Sigmoid colon (tissue), 7 donors: ENCODE measurements at regions of chr22 and their contacts with region 1.

Region 1: DNA sequence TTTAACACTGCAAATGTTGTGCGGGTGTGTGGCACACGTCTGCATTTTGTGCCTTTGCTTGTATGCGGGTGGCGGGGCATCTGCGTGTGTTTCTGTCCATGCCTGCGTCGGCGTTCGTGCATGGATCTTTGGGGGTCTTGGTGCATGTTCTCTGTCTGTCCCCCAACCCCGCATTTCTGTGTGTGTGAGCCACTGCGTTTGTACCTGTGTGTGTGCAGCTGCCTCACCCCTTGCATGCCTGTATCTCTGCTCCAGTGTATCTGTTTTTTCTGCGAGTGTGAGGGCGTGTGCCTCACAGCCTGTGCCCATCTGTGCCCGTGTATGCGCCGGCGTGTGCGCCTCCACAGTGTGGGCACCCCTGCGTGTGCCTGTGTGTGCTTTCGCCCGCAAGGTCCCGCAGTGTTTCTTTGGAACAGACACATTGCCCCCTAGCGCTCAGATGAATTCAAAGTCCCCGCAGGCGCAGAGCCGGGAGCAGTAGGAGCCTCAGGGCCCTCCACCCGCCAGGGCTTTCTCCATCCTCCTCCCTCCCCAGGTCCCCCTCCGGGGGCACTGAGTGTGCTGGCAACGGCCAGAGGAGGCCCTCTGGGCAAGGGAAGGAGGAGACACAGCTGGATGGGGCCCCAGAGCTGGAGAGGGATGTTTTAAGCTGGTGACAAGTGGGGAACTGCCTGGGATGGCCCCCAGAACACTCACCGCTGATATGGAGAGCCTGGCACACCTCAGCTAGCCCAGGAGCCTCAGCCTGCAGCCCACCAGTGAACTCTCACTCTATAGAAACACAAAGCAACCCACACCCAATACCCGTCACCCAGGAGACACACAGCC is 3.1 kb upstream of the MN1 start:
- DNase-seq: peak; percentile 88
- H3K4me3 ChIP-seq: no peak overlapping the region
- H3K27ac ChIP-seq: no peak overlapping the region
- H3K4me1 ChIP-seq: peaks cover 0 to 40% (median 33%) of the 10 kb centered on the region in 4 donors
- H3K27me3 ChIP-seq: peaks cover 0 to 15% (median 12%) of the 10 kb centered on the region in 3 donors
- CTCF ChIP-seq: peak; percentile 45 to 81 (median 62)
- EP300 ChIP-seq: no peak
- POLR2A ChIP-seq: no peak

Region 2: DNA sequence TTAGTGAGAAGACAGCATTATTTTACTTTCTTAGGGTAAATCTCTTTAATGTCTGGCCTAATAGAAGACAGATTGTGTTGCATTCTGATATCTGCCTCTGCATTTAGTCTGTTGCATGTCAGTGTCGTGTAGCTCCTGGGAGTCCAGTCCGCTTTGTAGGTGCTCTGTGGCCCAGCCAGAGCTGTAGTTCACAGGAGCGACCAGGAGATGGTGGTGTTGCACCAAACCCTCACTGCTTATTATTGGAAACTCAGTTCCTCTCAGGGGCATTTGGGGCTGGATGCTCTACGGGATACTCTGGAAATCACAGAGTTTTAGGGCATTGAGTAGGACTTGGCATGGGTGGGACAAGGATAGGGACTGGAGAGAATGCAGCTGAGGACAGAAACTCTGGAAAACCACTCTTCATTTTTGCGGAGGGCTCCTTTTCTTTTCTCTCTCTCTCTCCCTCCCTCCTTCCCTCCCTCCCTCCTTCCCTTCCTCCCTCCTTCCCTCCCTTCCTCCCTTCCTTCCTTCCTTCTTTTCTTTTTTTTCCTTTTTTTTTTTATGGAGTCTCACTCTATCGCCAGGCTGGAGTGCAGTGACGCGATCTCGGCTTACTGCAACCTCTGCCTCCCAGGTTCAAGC is 1125.6 kb before region 1 on chr22:
- intact Hi-C with region 1: loop called (anchors 5 kb)
- DNase-seq: peak; percentile 81
- H3K4me3 ChIP-seq: no peak overlapping the region
- H3K27ac ChIP-seq: no peak overlapping the region
- H3K4me1 ChIP-seq: peaks cover 0 to 18% (median 12%) of the 10 kb centered on the region in 4 donors
- H3K27me3 ChIP-seq: no peaks in the 10 kb centered on the region
- CTCF ChIP-seq: peak; percentile 49 to 88 (median 87)
- EP300 ChIP-seq: no peak
- POLR2A ChIP-seq: no peak

Region 3: GRCh38 chr22:26756675-26757293 is 1047.9 kb before region 1 on chr22:
- intact Hi-C with region 1: loop called (anchors 2 kb)
- DNase-seq: peak; percentile 77
- H3K4me3 ChIP-seq: peak overlapping the region in 3 of 4 donors; percentile 18 to 34 (median 30)
- H3K27ac ChIP-seq: no peak overlapping the region
- H3K4me1 ChIP-seq: peaks cover 0 to 9% (median 0%) of the 10 kb centered on the region in 4 donors
- H3K27me3 ChIP-seq: no peaks in the 10 kb centered on the region
- CTCF ChIP-seq: peak; percentile 58 to 93 (median 70)
- EP300 ChIP-seq: no peak
- POLR2A ChIP-seq: no peak

Region 4: GRCh38 chr22:26995235-26995634 is 809.4 kb before region 1 on chr22:
- intact Hi-C with region 1: loop called (anchors 10 kb)
- DNase-seq: peak; percentile 84
- H3K4me3 ChIP-seq: no peak overlapping the region
- H3K27ac ChIP-seq: peak overlapping the region in 2 of 4 donors; percentile 8 to 26
- H3K4me1 ChIP-seq: peaks cover 0 to 31% (median 23%) of the 10 kb centered on the region in 4 donors
- H3K27me3 ChIP-seq: no peaks in the 10 kb centered on the region
- CTCF ChIP-seq: no peak
- EP300 ChIP-seq: no peak
- POLR2A ChIP-seq: no peak

Region 5: GRCh38 chr22:27107824-27108223 is 696.9 kb before region 1 on chr22:
- intact Hi-C with region 1: loop called (anchors 10 kb)
- DNase-seq: peak; percentile 88
- H3K4me3 ChIP-seq: no peak overlapping the region
- H3K27ac ChIP-seq: peak overlapping the region; percentile 74 to 84 (median 78)
- H3K4me1 ChIP-seq: peaks cover 0 to 67% (median 54%) of the 10 kb centered on the region in 4 donors
- H3K27me3 ChIP-seq: no peaks in the 10 kb centered on the region
- CTCF ChIP-seq: no peak
- EP300 ChIP-seq: no peak
- POLR2A ChIP-seq: no peak

Region 6: DNA sequence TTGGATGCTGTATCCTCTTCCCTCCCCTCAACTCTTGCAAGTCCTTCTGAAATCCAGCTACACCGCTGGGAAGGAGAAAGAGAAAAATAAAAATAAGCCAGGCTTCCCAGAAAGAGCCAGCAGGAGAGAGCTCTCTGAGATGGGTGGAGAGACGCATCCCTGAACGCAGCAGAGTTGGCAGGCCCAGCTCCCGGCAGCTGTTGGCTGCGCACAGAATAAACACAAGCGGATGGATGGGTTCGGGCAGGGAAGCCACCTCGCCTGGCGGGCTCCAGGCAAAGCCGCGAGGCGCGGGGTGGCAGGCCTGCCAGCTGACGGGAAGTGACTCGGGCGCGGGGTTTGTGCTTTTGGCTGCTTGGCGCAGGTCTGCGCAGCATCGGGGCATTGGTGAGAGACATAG is 609.6 kb before region 1 on chr22:
- intact Hi-C with region 1: loop called (anchors 10 kb)
- DNase-seq: peak; percentile 88
- H3K4me3 ChIP-seq: no peak overlapping the region
- H3K27ac ChIP-seq: peak overlapping the region; percentile 40 to 67 (median 64)
- H3K4me1 ChIP-seq: peaks cover 0 to 12% (median 9%) of the 10 kb centered on the region in 4 donors
- H3K27me3 ChIP-seq: no peaks in the 10 kb centered on the region
- CTCF ChIP-seq: no peak
- EP300 ChIP-seq: no peak
- POLR2A ChIP-seq: no peak

Region 7: GRCh38 chr22:27405672-27406388 is 398.9 kb before region 1 on chr22:
- intact Hi-C with region 1: loop called (anchors 10 kb)
- DNase-seq: no peak
- H3K4me3 ChIP-seq: no peak overlapping the region
- H3K27ac ChIP-seq: no peak overlapping the region
- H3K4me1 ChIP-seq: no peaks in the 10 kb centered on the region
- H3K27me3 ChIP-seq: peaks cover 0 to 7% (median 0%) of the 10 kb centered on the region in 3 donors
- CTCF ChIP-seq: peak in 3 of 4 experiments; percentile 34 to 55 (median 47)
- EP300 ChIP-seq: no peak
- POLR2A ChIP-seq: no peak